Mammary epithelial cell (primary cell): ENCODE measurements at regions of chr20 and their contacts with region 1.

Region 1: GRCh38 chr20:46132705-46133120 is 14.6 kb downstream of the CD40 start:
- DNase-seq: peak; percentile 59
- H3K4me3 ChIP-seq: no peak overlapping the region
- H3K27ac ChIP-seq: no peak overlapping the region
- H3K4me1 ChIP-seq: peaks cover 5% of the 10 kb centered on the region
- H3K27me3 ChIP-seq: peaks cover 2% of the 10 kb centered on the region
- CTCF ChIP-seq: peak; percentile 72 to 92

Region 2: GRCh38 chr20:45812157-45813020 is 320.3 kb before region 1 on chr20 and contains the start of gene UBE2C:
- CTCF ChIA-PET with region 1: no interaction called
- dilution Hi-C with region 1: no loop called
- in situ Hi-C with region 1: no loop called
- intact Hi-C with region 1: no loop called
- DNase-seq: peak; percentile 100
- H3K4me3 ChIP-seq: peak within 1 kb of the TSS; percentile 74 to 97 (median 94)
- H3K27ac ChIP-seq: peak within 1 kb of the TSS; percentile 79
- H3K4me1 ChIP-seq: peaks cover 13% of the 10 kb centered on the region
- H3K27me3 ChIP-seq: no peaks in the 10 kb centered on the region
- CTCF ChIP-seq: no peak
- total RNA-seq, gene UBE2C: 1.0 to 80.5 TPM

Region 3: GRCh38 chr20:46022411-46023147 is 110.1 kb before region 1 on chr20:
- CTCF ChIA-PET with region 1: no interaction called
- dilution Hi-C with region 1: no loop called
- in situ Hi-C with region 1: no loop called
- intact Hi-C with region 1: loop called (anchors 5 kb)
- DNase-seq: peak; percentile 23
- H3K4me3 ChIP-seq: peak overlapping the region; percentile 8 to 59 (median 29)
- H3K27ac ChIP-seq: no peak overlapping the region
- H3K4me1 ChIP-seq: peaks cover 8% of the 10 kb centered on the region
- H3K27me3 ChIP-seq: no peaks in the 10 kb centered on the region
- CTCF ChIP-seq: peak; percentile 57 to 78

Region 4: GRCh38 chr20:46164254-46164653 is 31.5 kb after region 1 on chr20:
- CTCF ChIA-PET with region 1: no interaction called
- dilution Hi-C with region 1: no loop called
- in situ Hi-C with region 1: no loop called
- intact Hi-C with region 1: no loop called
- DNase-seq: no peak
- H3K4me3 ChIP-seq: no peak overlapping the region
- H3K27ac ChIP-seq: no peak overlapping the region
- H3K4me1 ChIP-seq: no peaks in the 10 kb centered on the region
- H3K27me3 ChIP-seq: no peaks in the 10 kb centered on the region
- CTCF ChIP-seq: no peak

Region 5: DNA sequence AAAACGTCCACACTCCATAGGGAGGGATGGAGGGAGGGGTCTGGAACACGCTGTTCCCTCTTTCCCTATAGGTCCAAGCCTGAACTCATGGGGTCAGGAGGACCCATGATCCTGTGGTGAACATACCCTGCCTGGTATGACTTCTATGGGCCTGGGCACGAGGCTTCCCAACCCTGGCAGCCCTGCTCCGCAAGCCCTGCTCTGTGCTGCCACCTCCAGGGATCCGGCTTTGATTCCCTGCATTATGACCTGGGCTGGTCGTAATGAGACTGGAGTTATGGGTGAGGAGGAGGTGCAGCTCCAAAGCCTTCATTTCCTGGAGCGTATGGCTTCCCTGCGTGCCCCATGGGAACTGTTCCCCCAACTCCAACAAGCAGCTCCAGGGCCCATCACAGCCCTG is 120.7 kb after region 1 on chr20:
- CTCF ChIA-PET with region 1: no interaction called
- dilution Hi-C with region 1: no loop called
- in situ Hi-C with region 1: no loop called
- intact Hi-C with region 1: loop called (anchors 1 kb)
- DNase-seq: no peak
- H3K4me3 ChIP-seq: no peak overlapping the region
- H3K27ac ChIP-seq: no peak overlapping the region
- H3K4me1 ChIP-seq: peaks cover 12% of the 10 kb centered on the region
- H3K27me3 ChIP-seq: peaks cover 7% of the 10 kb centered on the region
- CTCF ChIP-seq: peak; percentile 2 to 26

Region 6: GRCh38 chr20:46324960-46325703 is 192.4 kb after region 1 on chr20:
- CTCF ChIA-PET with region 1: no interaction called
- dilution Hi-C with region 1: loop called (anchors 5 kb)
- in situ Hi-C with region 1: loop called in 1 of 2 experiments (anchors 25 kb)
- intact Hi-C with region 1: loop called (anchors 1 kb)
- DNase-seq: no peak
- H3K4me3 ChIP-seq: no peak overlapping the region
- H3K27ac ChIP-seq: no peak overlapping the region
- H3K4me1 ChIP-seq: no peaks in the 10 kb centered on the region
- H3K27me3 ChIP-seq: no peaks in the 10 kb centered on the region
- CTCF ChIP-seq: peak; percentile 38 to 44

Region 7: DNA sequence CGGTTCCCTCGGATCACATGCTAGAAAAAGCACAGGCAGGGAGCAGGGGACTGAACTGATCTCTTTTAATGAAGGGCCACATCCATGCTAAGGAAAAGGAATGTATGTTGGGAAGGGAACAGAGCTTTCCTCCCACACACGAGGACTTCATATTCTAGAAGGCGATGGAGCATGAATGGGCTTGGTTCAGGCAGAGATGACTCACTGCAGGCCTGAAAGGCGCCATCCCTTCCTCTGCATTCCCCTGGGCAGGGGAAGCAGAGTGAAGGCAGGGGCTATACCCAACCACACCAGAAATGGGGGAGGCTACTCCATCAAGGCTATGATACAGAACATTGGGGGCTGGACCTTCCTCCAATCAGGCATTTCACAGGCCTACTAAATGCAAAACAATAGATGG is 243.1 kb after region 1 on chr20:
- CTCF ChIA-PET with region 1: no interaction called
- dilution Hi-C with region 1: no loop called
- in situ Hi-C with region 1: no loop called
- intact Hi-C with region 1: loop called (anchors 1 kb)
- DNase-seq: peak; percentile 41
- H3K4me3 ChIP-seq: no peak overlapping the region
- H3K27ac ChIP-seq: no peak overlapping the region
- H3K4me1 ChIP-seq: peaks cover 31% of the 10 kb centered on the region
- H3K27me3 ChIP-seq: no peaks in the 10 kb centered on the region
- CTCF ChIP-seq: no peak

Region 8: DNA sequence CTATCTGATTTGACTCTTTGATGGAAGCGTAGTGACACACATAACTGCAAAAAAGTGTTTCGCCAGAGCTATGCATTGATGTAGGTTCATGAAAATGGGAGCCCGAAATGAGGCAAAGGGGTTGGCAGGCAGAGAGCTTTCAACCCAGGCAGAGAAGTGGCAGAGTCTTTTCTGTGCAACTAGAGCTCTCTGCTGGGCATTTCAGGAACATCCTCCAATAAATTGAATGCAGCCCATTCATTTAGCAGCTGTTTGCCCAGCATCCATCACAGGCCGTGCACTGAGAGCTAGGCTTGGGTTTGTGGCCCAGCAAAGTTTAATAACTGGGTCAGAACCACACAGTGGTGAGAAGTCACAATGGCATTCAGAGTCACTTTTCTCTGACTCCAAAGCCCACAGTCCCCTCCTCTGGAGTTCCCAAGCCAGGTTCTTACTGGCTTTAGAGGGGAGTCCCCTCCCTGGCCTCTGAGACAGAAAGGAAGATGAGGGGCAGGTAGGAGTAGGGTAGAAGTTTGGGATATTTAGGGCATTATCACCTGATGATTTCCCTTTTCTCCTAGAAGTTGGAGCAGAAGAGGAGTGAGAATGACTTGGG is 305.5 kb after region 1 on chr20:
- CTCF ChIA-PET with region 1: interaction called, 8 read pairs
- dilution Hi-C with region 1: no loop called
- in situ Hi-C with region 1: no loop called
- intact Hi-C with region 1: loop called (anchors 1 kb)
- DNase-seq: peak; percentile 31
- H3K4me3 ChIP-seq: no peak overlapping the region
- H3K27ac ChIP-seq: no peak overlapping the region
- H3K4me1 ChIP-seq: no peaks in the 10 kb centered on the region
- H3K27me3 ChIP-seq: no peaks in the 10 kb centered on the region
- CTCF ChIP-seq: peak; percentile 39 to 57